CD14-positive monocyte (primary cell): ENCODE measurements at regions of chr2 and their contacts with region 1.

Region 1: DNA sequence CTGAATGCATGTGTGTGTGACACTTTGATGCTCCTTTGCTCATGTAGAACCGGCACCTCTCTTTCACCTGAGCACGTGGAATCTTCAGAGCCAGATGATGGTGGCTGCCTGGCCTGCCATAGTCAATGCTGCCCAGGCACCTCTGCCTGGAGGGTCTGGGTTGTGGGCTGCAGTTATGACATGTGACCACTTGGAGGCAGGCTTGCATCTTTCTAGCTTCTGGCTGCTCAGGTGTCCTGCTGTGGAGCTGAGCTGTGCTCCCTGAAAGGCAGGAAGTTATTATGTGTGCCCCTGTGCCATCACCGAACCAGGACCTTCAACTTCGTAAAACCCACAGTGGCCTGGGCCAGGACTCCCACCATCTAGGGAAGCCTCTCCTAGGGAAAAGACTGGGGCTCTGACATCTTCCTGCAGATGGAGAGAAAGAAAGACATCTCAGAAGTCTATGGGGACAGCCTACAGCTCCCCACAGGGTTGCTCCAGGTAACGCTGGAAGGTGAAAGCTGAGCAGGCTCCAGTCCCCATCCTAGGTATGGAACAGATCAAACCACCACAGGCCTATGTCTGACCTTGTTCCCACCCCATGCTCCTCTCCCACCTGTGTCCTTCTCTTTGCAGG is 30.2 kb downstream of the PSD4 start:
- DNase-seq: peak; percentile 41 to 72 (median 72)
- H3K4me3 ChIP-seq: no peak overlapping the region
- H3K4me3 Mint-ChIP-seq: no peak overlapping the region
- H3K27ac ChIP-seq: no peak overlapping the region
- H3K27ac Mint-ChIP-seq: peak overlapping the region in 2 of 7 donors; percentile 26 to 53
- H3K4me1 ChIP-seq: peaks cover 4 to 5% of the 10 kb centered on the region in 2 donors
- H3K4me1 Mint-ChIP-seq: peaks cover 7% of the 10 kb centered on the region
- H3K27me3 ChIP-seq: no peaks in the 10 kb centered on the region
- H3K27me3 Mint-ChIP-seq: peaks cover 2 to 4% (median 2%) of the 10 kb centered on the region in 3 donors
- CTCF ChIP-seq: peak; percentile 88

Region 2: DNA sequence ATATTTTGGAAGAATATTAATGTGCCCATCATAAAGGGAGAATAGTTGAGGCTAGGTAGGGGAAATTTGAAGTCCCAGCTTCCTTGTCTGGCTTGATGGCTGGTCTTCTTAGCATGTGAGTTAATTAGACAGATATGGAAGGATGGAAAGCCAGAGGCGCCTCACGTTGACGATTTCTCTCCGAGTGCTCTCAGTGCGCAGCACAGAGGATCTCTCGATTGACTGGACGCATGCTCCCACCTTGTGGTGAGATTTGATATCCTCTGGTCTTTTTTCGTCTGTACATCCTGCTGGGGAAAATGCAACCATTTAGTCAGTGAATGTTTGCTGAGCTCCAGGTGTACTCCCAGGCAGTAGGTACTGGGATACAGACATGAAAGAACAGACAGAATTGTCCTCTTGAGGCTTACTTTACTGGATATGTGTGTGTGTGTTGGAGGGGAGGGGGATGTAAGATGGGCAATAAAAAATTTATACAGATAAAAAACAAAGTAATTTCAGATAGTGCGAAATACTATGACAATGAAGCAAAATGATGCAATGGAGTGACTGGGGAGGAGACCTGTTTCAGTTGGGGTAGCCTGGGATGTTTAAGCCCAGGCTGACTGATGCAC is 166.6 kb after region 1 on chr2:
- intact Hi-C with region 1: loop called in 1 of 2 experiments (anchors 5 kb)
- DNase-seq: peak; percentile 52 to 76 (median 74)
- H3K4me3 ChIP-seq: no peak overlapping the region
- H3K4me3 Mint-ChIP-seq: no peak overlapping the region
- H3K27ac ChIP-seq: no peak overlapping the region
- H3K27ac Mint-ChIP-seq: peak overlapping the region in 3 of 7 donors; percentile 68 to 77 (median 71)
- H3K4me1 ChIP-seq: peaks cover 46 to 47% of the 10 kb centered on the region in 2 donors
- H3K4me1 Mint-ChIP-seq: peaks cover 57% of the 10 kb centered on the region
- H3K27me3 ChIP-seq: no peaks in the 10 kb centered on the region
- H3K27me3 Mint-ChIP-seq: peaks cover 0 to 4% (median 0%) of the 10 kb centered on the region in 3 donors
- CTCF ChIP-seq: peak; percentile 74

Region 3: DNA sequence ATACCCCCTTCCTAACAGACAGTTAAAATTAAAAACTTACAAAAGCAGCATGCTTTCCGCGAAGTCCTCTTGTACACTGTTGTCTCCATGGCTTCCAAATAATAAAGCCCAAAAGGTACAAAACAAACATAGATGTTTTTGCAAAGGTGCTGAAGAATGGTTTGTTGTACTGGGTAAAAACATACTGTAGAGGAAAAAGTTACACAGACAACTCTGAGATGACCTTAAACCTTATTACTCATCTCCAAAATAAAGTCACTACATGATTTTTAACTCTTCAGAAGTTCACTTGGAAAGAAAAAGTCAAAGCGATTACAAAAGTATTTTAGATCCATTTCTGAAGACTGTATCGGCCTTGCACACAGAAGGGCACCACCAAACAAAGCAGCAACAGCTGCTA is 546.4 kb after region 1 on chr2:
- intact Hi-C with region 1: no loop called
- DNase-seq: no peak
- H3K4me3 ChIP-seq: no peak overlapping the region
- H3K4me3 Mint-ChIP-seq: no peak overlapping the region
- H3K27ac ChIP-seq: no peak overlapping the region
- H3K27ac Mint-ChIP-seq: no peak overlapping the region
- H3K4me1 ChIP-seq: peaks cover 5 to 11% of the 10 kb centered on the region in 2 donors
- H3K4me1 Mint-ChIP-seq: peaks cover 10% of the 10 kb centered on the region
- H3K27me3 ChIP-seq: no peaks in the 10 kb centered on the region
- H3K27me3 Mint-ChIP-seq: no peaks in the 10 kb centered on the region
- CTCF ChIP-seq: no peak